Activated T-helper 1 cell treated with anti-CD3 and anti-CD28 coated beads, Interleukin-12 subunit alpha, Interleukin-12 subunit beta, Interleukin-2, Interleukin-4 antibody, amounts not matched to agents 30 ng/mL and 10 ng/mL and 1 ng/mL, durations not matched to agents 14 hours and 24 hours and 36 hours (primary cell): ENCODE measurements at regions of chr6 and their contacts with region 1.

Region 1: GRCh38 chr6:129672881-129673643 is 36.9 kb downstream of the ARHGAP18 start:
- DNase-seq: peak; percentile 20
- H3K4me3 Mint-ChIP-seq: peak overlapping the region; percentile 66
- H3K27ac Mint-ChIP-seq: peak overlapping the region; percentile 95
- H3K4me1 Mint-ChIP-seq: peaks cover 56% of the 10 kb centered on the region
- H3K27me3 Mint-ChIP-seq: no peaks in the 10 kb centered on the region

Region 2: DNA sequence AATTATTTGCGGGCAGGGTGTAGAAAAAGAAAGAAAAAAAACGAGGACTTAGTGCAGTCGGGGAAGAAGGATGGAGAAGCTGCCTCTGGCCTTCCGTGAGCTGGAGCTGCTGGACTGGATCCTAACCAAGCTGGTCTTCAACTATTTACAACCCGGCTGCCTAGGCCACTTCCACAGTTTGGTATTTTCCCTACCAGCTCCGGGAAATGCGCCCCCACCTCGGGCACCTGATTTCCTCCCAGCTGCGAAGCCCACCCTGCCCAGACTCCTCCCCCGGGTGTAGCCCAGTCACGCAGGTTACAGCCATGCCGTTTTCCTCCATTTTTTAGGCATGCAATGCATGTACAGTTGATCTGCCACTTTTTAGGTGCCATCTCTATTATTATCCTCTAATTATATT is 1793.4 kb before region 1 on chr6:
- intact Hi-C with region 1: loop called (anchors 5 kb)
- DNase-seq: no peak
- H3K4me3 Mint-ChIP-seq: peak overlapping the region; percentile 60
- H3K27ac Mint-ChIP-seq: peak overlapping the region; percentile 56
- H3K4me1 Mint-ChIP-seq: peaks cover 65% of the 10 kb centered on the region
- H3K27me3 Mint-ChIP-seq: no peaks in the 10 kb centered on the region

Region 3: GRCh38 chr6:129598244-129599187 is 74.5 kb before region 1 on chr6:
- intact Hi-C with region 1: loop called (anchors 1 kb)
- DNase-seq: peak; percentile 19
- H3K4me3 Mint-ChIP-seq: no peak overlapping the region
- H3K27ac Mint-ChIP-seq: no peak overlapping the region
- H3K4me1 Mint-ChIP-seq: no peaks in the 10 kb centered on the region
- H3K27me3 Mint-ChIP-seq: no peaks in the 10 kb centered on the region

Region 4: GRCh38 chr6:129683601-129684322 is 10.7 kb after region 1 on chr6:
- intact Hi-C with region 1: loop called (anchors 1 kb)
- DNase-seq: peak; percentile 55
- H3K4me3 Mint-ChIP-seq: peak overlapping the region; percentile 47
- H3K27ac Mint-ChIP-seq: peak overlapping the region; percentile 77
- H3K4me1 Mint-ChIP-seq: peaks cover 63% of the 10 kb centered on the region
- H3K27me3 Mint-ChIP-seq: no peaks in the 10 kb centered on the region

Region 5: DNA sequence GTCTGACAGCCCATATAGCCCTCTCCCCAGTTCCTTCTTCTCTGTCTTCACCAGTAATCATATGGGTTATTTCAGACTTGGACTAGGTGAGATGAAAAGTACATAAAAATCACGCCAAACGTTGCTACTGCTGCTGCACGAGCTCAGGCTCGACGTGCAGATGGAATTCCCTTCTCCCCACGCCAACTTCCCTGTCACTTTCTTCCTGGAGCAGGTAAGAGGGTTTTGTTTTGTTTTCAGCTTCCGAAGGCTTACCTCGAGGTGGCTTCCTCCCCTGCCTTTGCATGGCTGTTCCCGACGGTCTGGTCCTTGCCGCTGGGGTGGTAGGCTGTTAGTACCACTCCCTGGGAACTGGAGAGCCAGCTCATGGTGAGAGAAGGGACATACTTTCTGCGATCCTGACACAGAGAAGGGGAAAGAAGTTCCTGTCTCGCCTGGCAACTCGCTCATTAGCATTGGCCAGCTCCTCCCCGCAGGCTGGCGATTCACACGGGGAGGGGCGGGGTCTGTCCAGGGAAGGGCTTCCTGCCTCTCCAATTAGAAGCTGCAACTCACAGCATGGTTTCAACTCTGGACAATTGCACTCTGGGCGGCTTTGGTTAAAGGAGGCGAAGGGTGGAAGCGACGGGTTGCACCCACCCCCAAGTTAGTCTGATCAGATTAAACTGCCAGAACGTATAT is 36.8 kb after region 1 on chr6 and contains the start of gene ARHGAP18:
- intact Hi-C with region 1: loop called (anchors 1 kb)
- DNase-seq: peak; percentile 69
- H3K4me3 Mint-ChIP-seq: peak within 1 kb of the TSS; percentile 96
- H3K27ac Mint-ChIP-seq: peak within 1 kb of the TSS; percentile 79
- H3K4me1 Mint-ChIP-seq: peaks cover 55% of the 10 kb centered on the region
- H3K27me3 Mint-ChIP-seq: no peaks in the 10 kb centered on the region
- total RNA-seq, gene ARHGAP18: 3.8 and 5.0 TPM in 2 replicates

Region 6: GRCh38 chr6:129748212-129748900 is 75.3 kb after region 1 on chr6:
- intact Hi-C with region 1: loop called (anchors 1 kb)
- DNase-seq: peak; percentile 37
- H3K4me3 Mint-ChIP-seq: peak overlapping the region; percentile 63
- H3K27ac Mint-ChIP-seq: peak overlapping the region; percentile 63
- H3K4me1 Mint-ChIP-seq: peaks cover 46% of the 10 kb centered on the region
- H3K27me3 Mint-ChIP-seq: no peaks in the 10 kb centered on the region

Region 7: GRCh38 chr6:130625825-130626527 is 952.9 kb after region 1 on chr6:
- intact Hi-C with region 1: loop called (anchors 10 kb)
- DNase-seq: no peak
- H3K4me3 Mint-ChIP-seq: peak overlapping the region; percentile 15
- H3K27ac Mint-ChIP-seq: peak overlapping the region; percentile 81
- H3K4me1 Mint-ChIP-seq: peaks cover 49% of the 10 kb centered on the region
- H3K27me3 Mint-ChIP-seq: no peaks in the 10 kb centered on the region